Caco-2 (cell line): ENCODE measurements at regions of chr16 and their contacts with region 1.

Region 1: GRCh38 chr16:30838876-30839471 is 52.0 kb upstream of the ZNF629 start:
- DNase-seq: peak in 1 of 2 experiments; percentile 23
- H3K4me3 ChIP-seq: no peak overlapping the region
- H3K4me3 Mint-ChIP-seq: peak overlapping the region; percentile 47
- H3K27ac Mint-ChIP-seq: peak overlapping the region; percentile 71
- H3K4me1 ChIP-seq: peaks cover 33% of the 10 kb centered on the region
- H3K4me1 Mint-ChIP-seq: peaks cover 6% of the 10 kb centered on the region
- H3K27me3 ChIP-seq: no peaks in the 10 kb centered on the region
- H3K27me3 Mint-ChIP-seq: no peaks in the 10 kb centered on the region
- CTCF ChIP-seq: peak; percentile 20 to 25

Region 2: GRCh38 chr16:30805370-30806169 is 33.4 kb before region 1 on chr16:
- CTCF ChIA-PET with region 1: interaction called, 5 read pairs
- POLR2A ChIA-PET with region 1: interaction called, 12 read pairs
- intact Hi-C with region 1: no loop called
- DNase-seq: peak; percentile 85 to 88
- H3K4me3 ChIP-seq: peak overlapping the region; percentile 73
- H3K4me3 Mint-ChIP-seq: peak overlapping the region; percentile 84
- H3K27ac Mint-ChIP-seq: peak overlapping the region; percentile 88
- H3K4me1 ChIP-seq: peaks cover 11% of the 10 kb centered on the region; the same call in 1 of the 2 replicates
- H3K4me1 Mint-ChIP-seq: no peaks in the 10 kb centered on the region
- H3K27me3 ChIP-seq: no peaks in the 10 kb centered on the region
- H3K27me3 Mint-ChIP-seq: no peaks in the 10 kb centered on the region
- CTCF ChIP-seq: no peak